ENCODE measurements at regions of chr7 and their contacts with region 1.

Region 1: GRCh38 chr7:78020136-78020873 is 221.7 kb downstream of the PHTF2 start:
- DNase-seq: peak in 1 of 2 donors; percentile 59
- ATAC-seq: peak; percentile 91
- H3K4me3 ChIP-seq: peak overlapping the region; percentile 35 to 84
- H3K27ac ChIP-seq: peak overlapping the region; percentile 80 to 98
- H3K4me1 ChIP-seq: no peaks in the 10 kb centered on the region
- H3K27me3 ChIP-seq: no peaks in the 10 kb centered on the region

Region 2: GRCh38 chr7:77940647-77941046 is 79.7 kb before region 1 on chr7:
- intact Hi-C with region 1: loop called in 1 of 2 experiments (anchors 10 kb)
- DNase-seq: no peak
- ATAC-seq: no peak
- H3K4me3 ChIP-seq: no peak overlapping the region
- H3K27ac ChIP-seq: no peak overlapping the region
- H3K4me1 ChIP-seq: no peaks in the 10 kb centered on the region
- H3K27me3 ChIP-seq: no peaks in the 10 kb centered on the region

Region 3: DNA sequence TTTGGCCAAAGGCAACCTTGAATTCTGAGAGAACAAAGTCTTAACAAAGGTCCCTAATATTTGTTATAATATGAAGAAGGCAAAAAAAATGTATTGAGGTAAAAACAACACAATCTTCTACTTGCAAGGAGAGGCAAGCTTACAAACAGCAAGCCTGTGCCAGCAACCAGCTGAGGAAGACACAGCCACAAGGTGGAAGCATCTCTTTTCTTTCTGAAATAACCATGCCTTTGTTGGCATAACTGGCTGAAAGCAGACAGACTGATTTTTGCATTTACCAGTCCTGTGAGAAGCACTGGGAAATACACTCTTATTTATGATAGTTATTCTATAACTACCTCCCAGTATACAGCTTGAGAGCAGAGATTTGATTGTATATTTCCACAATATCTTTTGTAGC is 70.3 kb after region 1 on chr7:
- intact Hi-C with region 1: no loop called
- DNase-seq: no peak
- ATAC-seq: no peak
- H3K4me3 ChIP-seq: no peak overlapping the region
- H3K27ac ChIP-seq: no peak overlapping the region
- H3K4me1 ChIP-seq: no peaks in the 10 kb centered on the region
- H3K27me3 ChIP-seq: no peaks in the 10 kb centered on the region

Region 4: DNA sequence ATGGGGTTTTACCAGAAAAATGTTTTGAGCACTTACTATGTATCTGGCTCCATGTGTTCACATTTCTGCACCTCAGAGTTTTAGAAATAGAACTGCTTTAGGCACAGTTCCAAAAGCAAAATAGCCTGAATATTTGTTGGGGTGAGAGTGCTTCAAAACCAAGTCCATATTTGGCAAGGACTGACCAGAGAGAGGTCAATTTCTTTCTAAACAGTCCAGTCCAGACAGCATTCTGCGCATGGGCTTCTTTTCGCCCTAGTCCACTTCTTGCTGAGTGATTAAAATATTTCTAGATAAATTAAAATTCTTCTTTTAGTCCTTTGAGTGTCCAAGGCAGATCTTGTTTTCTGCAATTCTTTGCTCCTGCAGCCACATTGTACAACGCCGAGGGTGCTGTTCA is 205.2 kb after region 1 on chr7:
- intact Hi-C with region 1: loop called in 1 of 2 experiments (anchors 2 kb)
- DNase-seq: no peak
- ATAC-seq: peak; percentile 65
- H3K4me3 ChIP-seq: no peak overlapping the region
- H3K27ac ChIP-seq: peak overlapping the region in 1 of 2 donors; percentile 41
- H3K4me1 ChIP-seq: peaks cover 5 to 9% of the 10 kb centered on the region in 2 donors
- H3K27me3 ChIP-seq: no peaks in the 10 kb centered on the region

Region 5: DNA sequence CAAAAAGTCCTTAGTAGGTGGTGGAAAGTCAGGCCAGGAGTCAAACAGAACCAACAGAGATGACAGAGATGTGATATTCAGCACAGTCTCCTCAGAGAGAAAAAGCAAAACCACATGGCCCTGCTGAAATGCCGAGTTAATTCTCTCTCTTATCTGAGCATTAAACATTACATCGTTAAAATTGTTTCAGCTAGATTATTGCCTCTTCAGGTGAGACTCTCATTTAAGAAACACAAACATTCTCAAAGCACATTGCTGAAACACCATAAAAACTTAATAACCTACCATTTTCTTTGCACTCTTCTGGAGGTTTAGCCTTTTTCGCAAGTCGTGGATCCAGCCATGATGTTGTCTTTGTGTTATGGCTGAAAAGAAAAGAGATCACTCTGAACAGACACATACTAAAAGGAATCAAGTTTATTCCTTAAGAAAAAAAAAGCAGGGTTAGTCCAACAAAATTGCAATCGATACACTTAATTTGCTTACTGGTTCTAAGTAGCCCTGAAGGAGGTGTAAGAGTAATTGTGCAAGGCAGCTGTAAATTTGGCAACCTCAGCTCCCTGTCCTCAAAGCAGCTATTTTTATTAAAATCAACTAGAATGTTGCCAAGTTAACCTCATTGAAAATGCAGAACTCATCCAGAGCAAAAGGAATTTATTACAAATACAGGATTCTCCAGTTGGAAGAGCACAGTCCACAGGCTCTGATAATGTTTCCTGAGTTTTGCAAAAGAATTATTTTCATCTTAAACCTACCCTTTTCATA is 469.4 kb after region 1 on chr7:
- intact Hi-C with region 1: loop called in 1 of 2 experiments (anchors 5 kb)
- DNase-seq: no peak
- ATAC-seq: peak; percentile 26
- H3K4me3 ChIP-seq: peak overlapping the region in 1 of 2 donors; percentile 26
- H3K27ac ChIP-seq: peak overlapping the region in 1 of 2 donors; percentile 67
- H3K4me1 ChIP-seq: no peaks in the 10 kb centered on the region
- H3K27me3 ChIP-seq: no peaks in the 10 kb centered on the region

Region 6: GRCh38 chr7:79176859-79177477 is 1156.7 kb after region 1 on chr7:
- intact Hi-C with region 1: loop called (anchors 5 to 10 kb)
- DNase-seq: no peak
- ATAC-seq: peak; percentile 69
- H3K4me3 ChIP-seq: no peak overlapping the region
- H3K27ac ChIP-seq: no peak overlapping the region
- H3K4me1 ChIP-seq: no peaks in the 10 kb centered on the region
- H3K27me3 ChIP-seq: no peaks in the 10 kb centered on the region

Measured in aorta (tissue), 5 donors.